Activated naive CD4-positive, alpha-beta T cell treated with anti-CD3 and anti-CD28 coated beads for 36 hours (primary cell): ENCODE measurements at regions of chr5 and their contacts with region 1.

Region 1: DNA sequence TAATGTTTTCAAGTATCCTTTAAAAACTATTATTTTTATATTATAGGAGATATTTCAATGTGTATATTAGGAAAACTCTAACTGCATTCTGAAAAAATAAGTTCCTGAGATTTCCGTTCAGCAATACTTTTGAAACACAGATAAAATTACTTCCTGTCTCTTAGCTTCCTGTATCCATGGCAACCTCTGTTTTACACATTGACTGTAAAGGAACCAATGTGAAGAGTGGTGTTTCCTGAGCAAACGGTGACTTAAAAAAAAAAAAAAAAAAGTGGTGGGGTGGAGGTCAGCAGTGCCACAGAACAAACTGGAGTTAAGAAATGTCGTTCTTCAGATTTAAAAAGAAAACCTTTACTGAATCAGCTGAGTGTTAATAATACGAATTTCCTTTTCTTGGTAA is at the start of gene LRRC70:
- DNase-seq: no peak
- H3K4me3 Mint-ChIP-seq: no peak within 1 kb of the TSS
- H3K27ac Mint-ChIP-seq: no peak within 1 kb of the TSS
- H3K4me1 Mint-ChIP-seq: peaks cover 32% of the 10 kb centered on the region
- H3K27me3 Mint-ChIP-seq: no peaks in the 10 kb centered on the region
- total RNA-seq, gene LRRC70: 0.91 to 1.0 TPM

Region 2: GRCh38 chr5:62403434-62404250 is 174.9 kb before region 1 on chr5 and contains the start of gene DIMT1:
- CTCF ChIA-PET with region 1: no interaction called
- intact Hi-C with region 1: loop called (anchors 5 kb)
- DNase-seq: peak; percentile 97
- H3K4me3 Mint-ChIP-seq: peak within 1 kb of the TSS; percentile 98
- H3K27ac Mint-ChIP-seq: peak within 1 kb of the TSS; percentile 90
- H3K4me1 Mint-ChIP-seq: peaks cover 19% of the 10 kb centered on the region
- H3K27me3 Mint-ChIP-seq: no peaks in the 10 kb centered on the region
- total RNA-seq, gene DIMT1: 47.4 to 48.4 TPM

Region 3: DNA sequence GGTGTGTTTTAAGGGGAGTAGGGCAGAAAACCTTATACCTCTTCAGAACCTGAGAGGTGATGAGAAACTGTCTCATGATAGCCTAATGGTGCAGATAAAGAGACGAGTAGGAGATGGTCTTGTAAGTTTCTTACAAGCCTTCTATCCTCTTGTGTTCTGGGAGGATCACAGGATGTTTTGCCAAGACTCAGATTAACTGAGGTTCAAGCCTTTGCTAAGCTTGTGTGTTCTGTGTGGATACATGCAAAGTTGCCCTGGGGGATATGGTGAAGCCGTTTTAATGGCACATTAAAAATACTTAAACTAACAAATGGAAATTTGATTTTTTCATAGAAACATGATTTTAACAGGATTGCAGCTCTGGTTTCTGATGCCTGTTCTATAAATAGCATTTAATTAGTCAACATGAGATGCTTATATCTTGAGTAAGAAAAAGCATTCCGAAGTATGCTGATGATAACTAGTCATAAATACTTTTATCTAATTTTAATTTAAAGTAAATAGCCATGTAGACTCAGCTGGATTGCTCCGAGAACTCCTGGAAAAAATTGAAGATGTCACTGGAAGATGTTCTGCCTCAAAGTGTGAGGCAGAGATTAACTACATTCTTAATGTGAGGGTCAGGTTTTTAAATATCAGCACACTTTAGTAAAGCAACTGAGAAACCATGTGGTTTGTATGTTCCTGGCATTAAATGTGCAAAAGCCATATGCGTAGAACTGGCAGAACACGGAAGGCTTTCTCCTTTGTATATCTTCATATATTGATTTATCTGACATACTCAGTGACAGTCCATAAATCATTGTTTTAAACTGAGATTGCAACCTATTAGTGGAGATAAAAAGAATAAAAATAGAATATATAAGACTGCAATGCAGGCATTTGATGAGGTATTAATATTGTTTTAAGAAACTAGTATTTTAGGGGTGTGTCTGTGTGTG is 112.3 kb before region 1 on chr5:
- CTCF ChIA-PET with region 1: no interaction called
- intact Hi-C with region 1: loop called (anchors 5 kb)
- DNase-seq: no peak
- H3K4me3 Mint-ChIP-seq: no peak overlapping the region
- H3K27ac Mint-ChIP-seq: no peak overlapping the region
- H3K4me1 Mint-ChIP-seq: no peaks in the 10 kb centered on the region
- H3K27me3 Mint-ChIP-seq: no peaks in the 10 kb centered on the region